ENCODE measurements at regions of chr6 and their contacts with region 1.

Region 1: GRCh38 chr6:111478749-111479148 is 4.3 kb downstream of the REV3L start:
- DNase-seq: peak; percentile 31 to 54 (median 47)
- H3K4me3 ChIP-seq: no peak overlapping the region
- H3K4me3 Mint-ChIP-seq: peak overlapping the region in 1 of 8 donors; percentile 21
- H3K27ac ChIP-seq: no peak overlapping the region
- H3K27ac Mint-ChIP-seq: peak overlapping the region in 6 of 7 donors; percentile 36 to 86 (median 63)
- H3K4me1 ChIP-seq: peaks cover 29% of the 10 kb centered on the region
- H3K4me1 Mint-ChIP-seq: peaks cover 29 to 41% (median 34%) of the 10 kb centered on the region in 4 donors
- H3K27me3 ChIP-seq: no peaks in the 10 kb centered on the region
- H3K27me3 Mint-ChIP-seq: no peaks in the 10 kb centered on the region

Region 2: DNA sequence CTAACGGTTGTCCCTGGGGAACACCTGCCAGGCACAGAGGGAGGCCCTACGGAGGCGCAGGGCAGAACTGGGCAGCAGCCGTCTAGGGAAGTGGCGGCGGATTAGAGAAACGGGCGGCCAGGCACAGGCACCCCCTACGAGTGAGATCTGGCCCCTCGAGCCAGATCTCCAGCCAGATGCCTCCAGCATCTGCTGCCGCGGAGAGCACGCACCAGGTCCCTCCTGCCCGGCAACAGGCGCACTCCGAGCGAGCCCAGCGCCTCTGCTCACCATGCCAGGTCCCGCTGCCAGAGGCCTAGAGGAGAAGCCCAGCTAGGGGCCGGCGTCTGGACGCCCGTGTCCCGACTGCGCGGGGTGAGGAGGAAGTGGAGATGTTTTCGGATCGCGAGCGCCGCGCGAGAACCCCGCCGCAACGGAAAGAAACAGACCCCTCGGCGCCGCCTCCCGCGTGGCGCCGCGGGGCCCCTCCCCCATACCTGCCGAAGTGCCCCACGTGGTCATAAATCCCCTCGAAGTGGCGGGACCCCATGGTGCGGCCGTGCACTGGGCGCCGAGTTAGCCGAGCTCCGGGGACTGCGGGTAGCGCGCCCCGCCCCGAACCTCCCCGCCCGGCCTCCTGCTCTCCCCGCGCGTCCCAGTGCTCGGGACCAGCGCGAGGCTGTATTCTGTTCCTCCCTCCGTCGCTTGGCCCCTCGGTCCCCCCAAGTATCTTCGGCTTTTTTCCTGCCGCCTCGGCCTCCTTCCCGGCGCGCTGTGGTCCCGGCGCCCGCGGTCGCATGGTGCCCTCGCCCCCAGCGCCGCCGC is 1002.5 kb before region 1 on chr6 and contains the start of gene SLC22A16:
- CTCF ChIA-PET with region 1: no interaction called
- POLR2A ChIA-PET with region 1: no interaction called
- intact Hi-C with region 1: no loop called
- DNase-seq: no peak
- H3K4me3 ChIP-seq: no peak within 1 kb of the TSS
- H3K4me3 Mint-ChIP-seq: peak within 1 kb of the TSS; percentile 33 to 77 (median 54)
- H3K27ac ChIP-seq: no peak within 1 kb of the TSS
- H3K27ac Mint-ChIP-seq: no peak within 1 kb of the TSS
- H3K4me1 ChIP-seq: peaks cover 8% of the 10 kb centered on the region
- H3K4me1 Mint-ChIP-seq: peaks cover 8 to 16% (median 12%) of the 10 kb centered on the region in 4 donors
- H3K27me3 ChIP-seq: peaks cover 8% of the 10 kb centered on the region
- H3K27me3 Mint-ChIP-seq: peaks cover 13 to 44% of the 10 kb centered on the region in 2 donors
- total RNA-seq, gene SLC22A16: not detected

Region 3: GRCh38 chr6:111057074-111057752 is 421.5 kb before region 1 on chr6:
- CTCF ChIA-PET with region 1: interaction called, 7 read pairs
- POLR2A ChIA-PET with region 1: no interaction called
- intact Hi-C with region 1: loop called (anchors 5 kb)
- DNase-seq: peak in 4 of 5 donors; percentile 23 to 30 (median 27)
- H3K4me3 ChIP-seq: no peak overlapping the region
- H3K4me3 Mint-ChIP-seq: no peak overlapping the region
- H3K27ac ChIP-seq: no peak overlapping the region
- H3K27ac Mint-ChIP-seq: no peak overlapping the region
- H3K4me1 ChIP-seq: no peaks in the 10 kb centered on the region
- H3K4me1 Mint-ChIP-seq: peaks cover 0 to 5% (median 2%) of the 10 kb centered on the region in 4 donors
- H3K27me3 ChIP-seq: no peaks in the 10 kb centered on the region
- H3K27me3 Mint-ChIP-seq: no peaks in the 10 kb centered on the region

Region 4: DNA sequence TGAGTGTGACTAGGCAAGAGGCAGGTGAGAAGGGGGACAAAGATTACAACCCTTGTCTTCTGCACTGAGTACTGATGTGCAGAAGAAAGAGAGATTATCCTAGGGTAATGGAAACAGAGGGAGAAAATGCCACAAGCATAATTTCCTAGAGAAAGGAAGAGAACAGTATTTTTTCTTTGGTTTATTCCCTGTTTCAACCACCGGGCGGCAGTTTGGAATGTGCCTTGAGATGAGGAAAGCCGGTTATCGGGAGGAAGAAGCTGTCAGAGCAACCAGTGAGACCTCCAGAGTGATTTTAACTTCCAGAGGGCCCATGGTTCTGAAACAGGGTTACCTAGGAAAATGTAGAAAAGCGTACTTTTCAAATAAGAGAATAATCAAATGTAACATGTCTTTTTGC is 117.1 kb before region 1 on chr6:
- CTCF ChIA-PET with region 1: interaction called, 4 read pairs
- POLR2A ChIA-PET with region 1: no interaction called
- intact Hi-C with region 1: loop called (anchors 2 kb)
- DNase-seq: peak in 2 of 5 donors; percentile 6
- H3K4me3 ChIP-seq: no peak overlapping the region
- H3K4me3 Mint-ChIP-seq: no peak overlapping the region
- H3K27ac ChIP-seq: no peak overlapping the region
- H3K27ac Mint-ChIP-seq: no peak overlapping the region
- H3K4me1 ChIP-seq: no peaks in the 10 kb centered on the region
- H3K4me1 Mint-ChIP-seq: no peaks in the 10 kb centered on the region
- H3K27me3 ChIP-seq: no peaks in the 10 kb centered on the region
- H3K27me3 Mint-ChIP-seq: no peaks in the 10 kb centered on the region

Region 5: GRCh38 chr6:111462770-111463391 is 15.9 kb before region 1 on chr6:
- CTCF ChIA-PET with region 1: interaction called, 12 read pairs
- POLR2A ChIA-PET with region 1: interaction called, 17 read pairs
- intact Hi-C with region 1: loop called (anchors 2 kb)
- DNase-seq: no peak
- H3K4me3 ChIP-seq: no peak overlapping the region
- H3K4me3 Mint-ChIP-seq: peak overlapping the region in 3 of 8 donors; percentile 14 to 66 (median 36)
- H3K27ac ChIP-seq: no peak overlapping the region
- H3K27ac Mint-ChIP-seq: peak overlapping the region in 4 of 7 donors; percentile 5 to 83 (median 74)
- H3K4me1 ChIP-seq: peaks cover 16% of the 10 kb centered on the region
- H3K4me1 Mint-ChIP-seq: peaks cover 22 to 41% (median 31%) of the 10 kb centered on the region in 4 donors
- H3K27me3 ChIP-seq: no peaks in the 10 kb centered on the region
- H3K27me3 Mint-ChIP-seq: no peaks in the 10 kb centered on the region

Measured in CD4-positive, alpha-beta memory T cell (primary cell).